IMR-90 (cell line): ENCODE measurements at regions of chr10 and their contacts with region 1.

Region 1: DNA sequence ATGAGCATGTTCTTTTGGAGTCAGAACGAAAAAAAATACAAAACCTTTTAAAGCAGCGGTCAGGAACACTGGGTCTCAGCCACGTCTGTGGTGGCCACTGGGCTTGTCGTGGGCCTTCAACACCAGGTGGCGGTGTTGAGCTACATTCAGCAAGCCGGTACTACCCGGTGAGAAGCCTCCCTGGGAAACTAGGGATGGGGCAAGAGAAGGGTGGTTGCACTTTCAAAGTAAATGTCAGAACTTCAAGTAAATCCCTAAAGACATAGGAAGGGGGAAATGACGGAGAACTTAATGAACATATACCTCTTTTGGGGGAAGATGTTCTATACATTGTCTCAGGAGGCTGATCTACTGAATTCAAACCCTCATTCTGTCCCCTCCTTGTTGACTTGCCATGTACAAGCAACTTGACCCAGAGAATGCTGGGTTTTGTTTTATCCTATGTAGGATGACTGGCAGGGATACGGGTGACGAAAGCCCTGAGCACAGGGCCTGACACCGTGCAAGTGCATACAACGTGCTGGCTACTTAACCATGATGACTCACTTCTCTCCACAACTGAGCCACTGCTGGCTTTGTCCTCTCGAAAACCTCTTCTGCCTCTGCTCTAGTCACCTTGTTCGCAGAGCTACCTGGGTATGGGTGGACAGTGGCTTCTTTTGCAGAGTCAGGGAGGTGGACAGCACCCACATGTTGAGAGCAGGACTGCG is 49.0 kb upstream of the BAMBI start:
- DNase-seq: peak; percentile 79
- ATAC-seq: peak; percentile 89
- H3K4me3 ChIP-seq: no peak overlapping the region
- H3K27ac ChIP-seq: no peak overlapping the region
- H3K4me1 ChIP-seq: peaks cover 2% of the 10 kb centered on the region; the same call in 1 of the 2 replicates
- H3K27me3 ChIP-seq: peaks cover 9% of the 10 kb centered on the region; the same call in 1 of the 2 replicates
- CTCF ChIP-seq: peak; percentile 95
- POLR2A ChIP-seq: no peak
- RAD21 ChIP-seq: peak; percentile 92

Region 2: GRCh38 chr10:28663576-28664313 is 35.4 kb after region 1 on chr10:
- CTCF ChIA-PET with region 1: interaction called, 6 read pairs
- POLR2A ChIA-PET with region 1: no interaction called
- dilution Hi-C with region 1: no loop called
- in situ Hi-C with region 1: no loop called
- intact Hi-C with region 1: loop called (anchors 2 kb)
- DNase-seq: peak; percentile 87
- ATAC-seq: peak; percentile 84
- H3K4me3 ChIP-seq: no peak overlapping the region
- H3K27ac ChIP-seq: no peak overlapping the region
- H3K4me1 ChIP-seq: peaks cover 6% of the 10 kb centered on the region
- H3K27me3 ChIP-seq: peaks cover 25% of the 10 kb centered on the region
- CTCF ChIP-seq: peak; percentile 99
- POLR2A ChIP-seq: peak; percentile 54; the same call in 1 of the 2 replicates
- RAD21 ChIP-seq: peak; percentile 100

Region 3: DNA sequence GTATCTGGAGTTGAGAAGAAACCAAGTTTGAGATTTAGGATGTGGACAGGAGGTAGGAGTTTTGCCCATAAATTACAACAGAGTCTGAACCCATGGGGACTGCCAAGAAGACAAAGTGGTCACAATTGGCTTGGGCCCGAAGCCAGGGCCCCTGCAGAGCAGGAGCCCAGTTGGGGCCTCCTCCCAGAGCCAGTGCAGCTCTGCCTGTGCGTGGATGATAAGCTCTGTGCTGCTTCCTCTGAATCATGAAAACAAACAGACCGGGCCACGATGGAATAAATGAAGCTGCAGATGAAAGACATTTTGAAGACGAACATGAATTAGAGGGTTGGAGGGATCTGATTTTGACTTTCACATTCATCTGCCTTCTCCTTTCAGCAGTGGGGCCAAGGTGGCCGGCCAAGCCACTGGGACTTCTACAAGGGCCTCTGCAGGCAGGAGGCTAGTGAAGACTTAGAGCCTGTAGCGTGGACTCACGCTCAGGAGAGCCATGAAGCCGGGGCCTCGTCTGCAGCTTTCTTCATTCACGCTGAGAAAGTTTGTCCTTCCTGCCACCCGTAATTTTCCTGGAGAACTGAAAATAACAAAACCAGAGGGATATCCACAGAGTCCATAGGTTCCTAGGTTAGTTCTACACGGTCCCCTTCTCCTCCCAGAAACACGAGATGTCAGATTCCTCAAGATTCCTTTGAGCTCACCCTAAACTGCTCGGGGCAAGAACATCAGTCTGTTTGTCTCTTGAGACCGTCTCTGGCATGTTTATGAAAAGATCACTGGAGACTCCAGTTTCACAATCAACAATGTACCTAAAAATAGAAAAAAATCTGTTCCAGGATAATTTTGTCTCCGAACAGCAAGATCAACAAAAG is 503.8 kb after region 1 on chr10:
- CTCF ChIA-PET with region 1: no interaction called
- POLR2A ChIA-PET with region 1: no interaction called
- dilution Hi-C with region 1: no loop called
- in situ Hi-C with region 1: no loop called
- intact Hi-C with region 1: loop called (anchors 1 kb)
- DNase-seq: peak; percentile 19
- ATAC-seq: peak; percentile 49; the same call in 1 of the 2 replicates
- H3K4me3 ChIP-seq: no peak overlapping the region
- H3K27ac ChIP-seq: no peak overlapping the region
- H3K4me1 ChIP-seq: peaks cover 15% of the 10 kb centered on the region
- H3K27me3 ChIP-seq: peaks cover 3% of the 10 kb centered on the region
- CTCF ChIP-seq: no peak
- POLR2A ChIP-seq: no peak
- RAD21 ChIP-seq: no peak

Region 4: DNA sequence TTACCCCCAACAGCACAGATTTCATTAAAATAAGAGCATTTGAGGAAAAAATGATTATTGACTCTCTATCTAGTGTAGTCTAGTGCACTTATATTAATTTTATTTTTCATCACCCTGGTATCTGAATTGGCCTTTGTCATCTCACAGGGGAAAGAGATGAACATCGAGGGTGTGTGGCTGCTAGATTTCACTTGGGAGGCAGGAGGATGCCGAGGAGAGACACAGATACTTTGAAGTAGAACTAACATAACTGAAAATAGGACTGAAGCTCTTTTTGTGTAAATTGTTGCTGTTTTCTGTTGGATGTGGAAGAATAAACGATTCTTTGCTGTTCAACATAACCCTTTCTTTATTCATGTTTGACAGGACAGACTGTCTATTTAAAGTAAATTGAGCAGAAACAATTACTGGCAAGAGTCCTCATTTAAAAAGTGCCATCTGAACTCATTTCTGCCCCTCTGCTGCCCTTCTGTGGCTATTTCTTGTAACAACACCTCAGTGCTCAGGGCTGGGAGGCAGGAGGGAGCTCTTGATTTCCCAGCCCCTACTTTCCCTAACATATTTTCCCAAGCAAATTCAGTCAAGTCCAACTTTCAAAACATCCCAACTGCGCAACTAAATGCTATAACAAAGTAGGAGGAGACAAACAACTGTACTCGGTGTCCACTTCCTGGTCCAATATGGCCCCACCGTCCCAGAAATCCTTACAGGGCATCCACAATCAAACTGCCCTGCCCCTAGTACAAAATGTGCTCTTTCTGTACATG is 676.1 kb after region 1 on chr10:
- CTCF ChIA-PET with region 1: no interaction called
- POLR2A ChIA-PET with region 1: no interaction called
- dilution Hi-C with region 1: no loop called
- in situ Hi-C with region 1: no loop called
- intact Hi-C with region 1: loop called (anchors 1 kb)
- DNase-seq: peak; percentile 70
- ATAC-seq: peak; percentile 98
- H3K4me3 ChIP-seq: no peak overlapping the region
- H3K27ac ChIP-seq: no peak overlapping the region
- H3K4me1 ChIP-seq: no peaks in the 10 kb centered on the region
- H3K27me3 ChIP-seq: no peaks in the 10 kb centered on the region; the same call in 1 of the 2 replicates
- CTCF ChIP-seq: peak; percentile 91
- POLR2A ChIP-seq: no peak
- RAD21 ChIP-seq: peak; percentile 93

Region 5: GRCh38 chr10:29392376-29393021 is 764.2 kb after region 1 on chr10:
- CTCF ChIA-PET with region 1: interaction called, 6 read pairs
- POLR2A ChIA-PET with region 1: no interaction called
- dilution Hi-C with region 1: no loop called
- in situ Hi-C with region 1: no loop called
- intact Hi-C with region 1: loop called (anchors 5 kb)
- DNase-seq: peak; percentile 31
- ATAC-seq: peak; percentile 94
- H3K4me3 ChIP-seq: no peak overlapping the region
- H3K27ac ChIP-seq: no peak overlapping the region
- H3K4me1 ChIP-seq: no peaks in the 10 kb centered on the region
- H3K27me3 ChIP-seq: peaks cover 50% of the 10 kb centered on the region
- CTCF ChIP-seq: peak; percentile 67
- POLR2A ChIP-seq: no peak
- RAD21 ChIP-seq: peak; percentile 60

Region 6: GRCh38 chr10:29443745-29444523 is 815.6 kb after region 1 on chr10:
- CTCF ChIA-PET with region 1: no interaction called
- POLR2A ChIA-PET with region 1: no interaction called
- dilution Hi-C with region 1: no loop called
- in situ Hi-C with region 1: no loop called
- intact Hi-C with region 1: loop called (anchors 2 kb)
- DNase-seq: peak; percentile 25
- ATAC-seq: peak; percentile 36; the same call in 1 of the 2 replicates
- H3K4me3 ChIP-seq: no peak overlapping the region
- H3K27ac ChIP-seq: no peak overlapping the region
- H3K4me1 ChIP-seq: peaks cover 4% of the 10 kb centered on the region
- H3K27me3 ChIP-seq: no peaks in the 10 kb centered on the region
- CTCF ChIP-seq: no peak
- POLR2A ChIP-seq: no peak
- RAD21 ChIP-seq: no peak

Region 7: DNA sequence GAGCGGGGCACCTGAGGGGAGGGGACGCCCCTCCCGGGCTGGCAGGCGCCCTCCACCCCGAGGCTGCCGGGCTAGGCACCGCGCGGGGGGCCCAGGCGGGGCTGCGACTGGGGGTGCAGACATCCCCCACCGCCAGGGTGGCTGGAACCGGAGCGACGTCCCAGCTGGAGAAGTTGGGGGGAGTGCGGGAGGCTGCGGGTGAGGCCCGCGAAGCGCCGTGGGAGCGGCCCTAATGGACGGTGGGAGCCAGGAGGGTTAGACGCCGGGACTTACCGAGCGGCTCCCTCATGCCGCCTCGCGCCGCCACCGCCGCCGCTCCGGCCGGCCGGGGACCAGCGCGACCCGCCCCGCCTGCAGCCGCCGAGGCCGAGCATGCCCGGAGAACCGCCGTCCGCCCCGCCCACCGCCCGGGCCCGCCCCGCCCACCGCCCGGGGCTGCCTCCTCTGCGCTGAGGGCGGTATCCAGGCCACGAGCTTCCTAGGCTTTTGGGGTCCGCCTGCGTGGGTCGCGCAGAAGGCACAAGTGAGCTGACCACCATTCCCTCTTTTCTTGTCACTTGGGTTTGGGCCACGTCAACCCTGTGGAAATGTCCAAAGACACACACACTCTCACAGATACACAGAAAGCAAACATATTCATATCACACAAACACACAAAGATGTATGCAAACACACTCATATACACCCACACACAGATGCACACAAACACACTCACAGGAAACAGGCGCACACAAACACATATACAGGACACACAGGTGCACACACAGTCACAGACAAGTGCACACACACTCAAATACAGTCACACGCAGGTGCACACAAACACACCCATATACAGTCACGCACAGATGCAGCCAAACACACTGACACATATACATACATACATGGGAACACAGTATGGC is 1431.1 kb after region 1 on chr10 and contains the start of gene JCAD:
- CTCF ChIA-PET with region 1: no interaction called
- POLR2A ChIA-PET with region 1: no interaction called
- dilution Hi-C with region 1: no loop called
- in situ Hi-C with region 1: no loop called
- intact Hi-C with region 1: no loop called
- DNase-seq: no peak
- ATAC-seq: peak; percentile 82
- H3K4me3 ChIP-seq: peak within 1 kb of the TSS; percentile 99
- H3K27ac ChIP-seq: peak within 1 kb of the TSS; percentile 99
- H3K4me1 ChIP-seq: peaks cover 17% of the 10 kb centered on the region
- H3K27me3 ChIP-seq: no peaks in the 10 kb centered on the region
- CTCF ChIP-seq: no peak
- POLR2A ChIP-seq: no peak
- RAD21 ChIP-seq: no peak
- total RNA-seq, gene JCAD: 16.8 and 18.9 TPM in 2 replicates